ENCODE measurements at regions of chr6 and their contacts with region 1.

Region 1: DNA sequence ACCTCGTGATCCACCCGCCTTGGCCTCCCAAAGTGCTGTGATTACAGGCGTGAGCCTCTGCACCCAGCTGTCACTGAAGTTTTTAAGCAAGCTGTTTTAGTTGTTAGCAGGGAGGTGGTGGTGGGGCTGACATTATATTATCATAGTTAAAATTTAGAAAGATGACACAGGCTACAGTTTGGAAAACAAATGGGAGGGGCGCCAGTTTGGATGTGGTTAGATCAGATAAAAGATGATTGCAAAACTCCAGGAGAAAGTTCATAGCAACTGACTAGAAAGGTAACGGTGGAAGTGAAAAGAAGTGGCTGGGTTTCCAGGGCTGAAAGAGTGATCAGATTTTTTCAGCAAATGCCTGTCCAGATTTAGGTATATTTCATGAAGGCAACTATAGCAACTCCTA is 311.9 kb upstream of the CITED2 start:
- DNase-seq: no peak
- ATAC-seq: no peak
- H3K4me3 ChIP-seq: no peak overlapping the region
- H3K4me3 Mint-ChIP-seq: no peak overlapping the region
- H3K27ac ChIP-seq: no peak overlapping the region
- H3K27ac Mint-ChIP-seq: no peak overlapping the region
- H3K4me1 ChIP-seq: no peaks in the 10 kb centered on the region
- H3K4me1 Mint-ChIP-seq: no peaks in the 10 kb centered on the region
- H3K27me3 ChIP-seq: no peaks in the 10 kb centered on the region
- H3K27me3 Mint-ChIP-seq: no peaks in the 10 kb centered on the region
- CTCF ChIP-seq: no peak

Region 2: GRCh38 chr6:139577763-139578604 is 108.3 kb before region 1 on chr6:
- CTCF ChIA-PET with region 1: no interaction called
- POLR2A ChIA-PET with region 1: no interaction called
- intact Hi-C with region 1: loop called in 1 of 2 experiments (anchors 5 kb)
- DNase-seq: no peak
- ATAC-seq: no peak
- H3K4me3 ChIP-seq: no peak overlapping the region
- H3K4me3 Mint-ChIP-seq: no peak overlapping the region
- H3K27ac ChIP-seq: no peak overlapping the region
- H3K27ac Mint-ChIP-seq: no peak overlapping the region
- H3K4me1 ChIP-seq: peaks cover 6% of the 10 kb centered on the region
- H3K4me1 Mint-ChIP-seq: peaks cover 17% of the 10 kb centered on the region
- H3K27me3 ChIP-seq: no peaks in the 10 kb centered on the region
- H3K27me3 Mint-ChIP-seq: peaks cover 2% of the 10 kb centered on the region
- CTCF ChIP-seq: no peak

Measured in CD8-positive, alpha-beta T cell (primary cell).